ENCODE measurements at regions of chr13 and their contacts with region 1.

Region 1: GRCh38 chr13:97109841-97110492 is 112.2 kb upstream of the MBNL2 start:
- H3K4me3 ChIP-seq: no peak overlapping the region
- H3K27ac ChIP-seq: no peak overlapping the region
- H3K4me1 ChIP-seq: no peaks in the 10 kb centered on the region; the same call in 1 of the 2 replicates
- CTCF ChIP-seq: no peak; the same call in 1 of the 2 replicates

Region 2: DNA sequence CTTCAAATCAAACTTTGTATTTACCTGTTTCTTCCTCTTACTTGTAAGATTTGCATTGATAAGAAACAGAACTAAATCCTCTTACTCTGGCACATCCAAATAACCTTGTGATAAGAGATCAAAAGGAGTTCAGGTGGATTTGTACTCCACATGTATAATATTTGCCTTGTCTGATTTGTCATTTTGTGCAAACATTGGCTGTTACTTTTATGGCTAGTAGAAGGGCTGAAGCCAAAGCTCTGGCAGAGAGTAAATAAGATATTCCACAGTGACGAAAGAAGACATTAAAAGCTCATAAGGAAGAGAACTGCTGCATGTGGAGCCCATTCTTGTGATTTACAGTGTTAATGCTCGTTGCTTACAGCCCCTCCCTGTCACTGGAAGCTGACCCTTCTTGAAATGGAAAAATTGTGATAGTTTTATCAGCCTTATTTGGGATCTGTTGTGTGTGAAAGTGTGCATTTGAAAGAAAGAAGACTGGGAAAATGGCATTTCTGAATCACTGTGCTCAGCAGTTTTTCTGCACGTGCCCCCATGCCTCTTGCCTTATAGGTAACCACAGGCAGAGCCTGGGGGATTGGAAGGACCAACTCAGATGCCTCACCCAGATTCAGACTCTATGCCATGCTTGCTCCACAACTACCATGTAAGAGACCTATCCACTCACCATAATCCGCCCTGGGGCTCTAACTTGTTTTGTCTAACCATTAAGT is 183.9 kb before region 1 on chr13:
- CTCF ChIA-PET with region 1: no interaction called
- POLR2A ChIA-PET with region 1: no interaction called
- H3K4me3 ChIP-seq: no peak overlapping the region
- H3K27ac ChIP-seq: no peak overlapping the region
- H3K4me1 ChIP-seq: no peaks in the 10 kb centered on the region
- CTCF ChIP-seq: no peak

Region 3: DNA sequence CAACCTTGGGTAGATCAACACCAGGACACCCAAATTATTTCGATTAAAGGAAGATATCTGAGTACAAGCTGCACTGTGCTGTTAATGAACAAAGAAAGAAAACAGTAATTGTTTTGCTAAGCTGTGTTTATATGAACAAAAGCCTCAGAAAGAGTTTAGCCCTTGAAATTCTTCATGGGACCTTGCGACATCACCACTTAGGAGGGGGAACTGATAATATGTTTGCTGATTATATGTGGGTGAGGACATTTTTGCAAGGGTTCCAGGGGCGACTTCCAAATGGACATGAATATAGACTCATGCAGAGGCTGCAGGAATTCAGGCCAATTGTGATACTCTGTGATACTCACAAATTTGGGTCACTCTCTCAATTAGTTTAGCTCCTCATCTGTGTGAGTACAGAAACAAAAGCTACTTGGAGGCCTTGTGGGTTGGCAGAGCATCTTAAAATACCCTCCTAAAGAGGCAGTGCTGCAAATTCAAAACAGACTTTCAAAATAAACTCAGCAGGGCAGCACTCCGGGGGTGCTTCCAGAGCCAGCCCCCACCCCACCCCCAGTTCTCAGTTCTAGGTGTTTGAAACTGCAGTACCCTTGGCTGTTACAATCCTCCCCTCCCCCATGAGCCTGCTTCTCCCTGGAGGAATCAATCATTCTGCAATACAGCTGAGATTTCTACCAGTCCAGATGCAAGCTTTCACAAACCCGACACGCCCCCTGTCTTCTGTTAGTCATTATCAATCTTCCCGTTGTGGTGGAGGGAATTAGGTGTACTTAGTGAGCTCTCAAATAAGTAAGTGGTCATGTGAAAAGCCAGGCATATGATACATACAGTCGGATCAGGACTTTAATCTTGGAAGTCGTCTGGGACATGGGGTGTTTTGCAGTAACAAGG is 15.2 kb after region 1 on chr13:
- CTCF ChIA-PET with region 1: interaction called, 11 read pairs
- POLR2A ChIA-PET with region 1: no interaction called
- H3K4me3 ChIP-seq: no peak overlapping the region
- H3K27ac ChIP-seq: no peak overlapping the region
- H3K4me1 ChIP-seq: peaks cover 13% of the 10 kb centered on the region; the same call in 1 of the 2 replicates
- CTCF ChIP-seq: no peak

Region 4: DNA sequence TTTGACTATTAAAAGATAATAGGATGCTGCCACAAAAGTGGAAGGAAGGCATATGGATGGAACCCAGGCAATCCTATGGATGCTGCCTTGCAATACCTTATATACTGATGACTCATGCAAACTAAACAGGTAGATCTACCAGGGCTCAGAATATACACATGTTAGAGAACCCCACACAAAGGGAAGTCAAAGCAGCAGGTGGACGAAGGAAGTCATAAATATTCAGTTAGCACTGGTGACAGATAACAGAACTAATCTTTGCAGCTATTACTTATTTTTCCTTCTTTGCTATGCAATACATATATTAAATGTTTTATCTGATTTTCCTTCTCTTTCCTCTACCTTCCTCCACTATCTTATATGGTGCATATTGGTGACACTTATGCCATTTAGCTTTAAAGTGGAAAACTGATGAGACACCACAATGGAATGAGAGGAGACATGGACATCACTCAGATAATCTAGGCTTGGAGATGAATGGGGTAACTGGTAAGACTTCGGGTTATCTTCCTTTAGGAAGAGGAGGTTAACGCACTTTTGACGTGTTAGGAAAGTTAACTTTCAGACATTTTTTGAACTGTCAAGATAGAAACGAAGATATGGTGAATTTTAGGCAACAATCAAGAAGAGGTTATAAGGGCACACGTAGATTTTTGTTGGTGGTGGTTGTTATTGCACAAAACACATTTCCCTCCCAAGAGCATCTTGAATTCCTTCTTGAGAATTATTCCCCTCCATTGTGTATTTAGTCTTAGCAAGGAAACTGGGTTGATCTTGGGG is 72.3 kb after region 1 on chr13:
- CTCF ChIA-PET with region 1: interaction called, 12 read pairs
- POLR2A ChIA-PET with region 1: no interaction called
- H3K4me3 ChIP-seq: no peak overlapping the region
- H3K27ac ChIP-seq: no peak overlapping the region
- H3K4me1 ChIP-seq: no peaks in the 10 kb centered on the region
- CTCF ChIP-seq: no peak

Region 5: GRCh38 chr13:97221989-97222700 is 112.2 kb after region 1 on chr13 and contains the start of gene MBNL2:
- CTCF ChIA-PET with region 1: interaction called, 25 read pairs
- POLR2A ChIA-PET with region 1: interaction called, 6 read pairs
- H3K4me3 ChIP-seq: peak within 1 kb of the TSS; percentile 50
- H3K27ac ChIP-seq: peak within 1 kb of the TSS; percentile 70
- H3K4me1 ChIP-seq: peaks cover 11% of the 10 kb centered on the region
- CTCF ChIP-seq: no peak

Region 6: DNA sequence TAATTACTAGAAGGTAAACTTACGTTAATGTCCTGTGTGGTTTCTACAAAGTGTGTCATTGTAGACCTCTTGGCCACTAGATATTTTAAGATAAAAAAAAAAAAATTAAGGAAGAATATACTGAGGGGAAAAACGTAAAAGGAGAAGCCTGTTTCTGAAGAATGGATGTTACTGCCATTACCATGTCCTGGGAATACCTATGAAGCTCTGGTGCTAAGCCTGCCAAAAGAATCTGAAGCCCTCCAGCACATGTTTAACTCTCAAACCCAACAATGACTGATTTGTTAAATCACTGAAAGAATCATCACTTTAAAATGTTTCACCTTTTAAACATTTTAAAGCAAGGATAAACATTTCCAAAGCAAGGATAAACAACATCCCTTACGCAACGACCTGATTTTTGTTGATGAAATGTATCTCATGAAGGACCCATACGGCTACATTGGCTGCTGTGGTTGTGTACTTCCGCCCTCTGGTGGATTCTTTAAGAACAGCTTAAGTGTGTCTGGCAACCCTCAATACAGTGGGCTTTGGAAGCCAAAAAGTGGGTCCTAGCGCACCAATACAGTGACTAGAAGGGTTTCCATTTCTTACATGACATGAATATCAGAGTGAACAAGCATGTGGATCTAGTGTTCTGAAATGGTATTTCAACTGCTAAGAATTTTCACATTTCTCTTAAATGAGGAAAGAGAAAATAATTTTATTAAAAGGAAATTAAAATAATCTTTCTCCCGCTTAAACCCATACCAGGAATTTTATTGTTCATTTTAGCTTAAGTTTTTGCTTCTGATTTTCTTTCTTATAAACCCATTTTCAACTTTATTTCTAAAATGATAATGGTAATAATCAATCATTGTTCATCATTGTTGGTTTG is 249.5 kb after region 1 on chr13:
- CTCF ChIA-PET with region 1: interaction called, 58 read pairs
- POLR2A ChIA-PET with region 1: no interaction called
- H3K4me3 ChIP-seq: no peak overlapping the region
- H3K27ac ChIP-seq: no peak overlapping the region
- H3K4me1 ChIP-seq: no peaks in the 10 kb centered on the region
- CTCF ChIP-seq: no peak

Measured in HEK293 (cell line).